Activated T-helper 2 cell treated with anti-CD3 and anti-CD28 coated beads, Interferon-gamma antibody, Interleukin-2, Interleukin-4, amounts not matched to agents 10 μg/mL and 5 μg/mL and 100 μg/mL, durations not matched to agents 14 hours and 24 hours and 36 hours (primary cell): ENCODE measurements at regions of chr1 and their contacts with region 1.

Region 1: DNA sequence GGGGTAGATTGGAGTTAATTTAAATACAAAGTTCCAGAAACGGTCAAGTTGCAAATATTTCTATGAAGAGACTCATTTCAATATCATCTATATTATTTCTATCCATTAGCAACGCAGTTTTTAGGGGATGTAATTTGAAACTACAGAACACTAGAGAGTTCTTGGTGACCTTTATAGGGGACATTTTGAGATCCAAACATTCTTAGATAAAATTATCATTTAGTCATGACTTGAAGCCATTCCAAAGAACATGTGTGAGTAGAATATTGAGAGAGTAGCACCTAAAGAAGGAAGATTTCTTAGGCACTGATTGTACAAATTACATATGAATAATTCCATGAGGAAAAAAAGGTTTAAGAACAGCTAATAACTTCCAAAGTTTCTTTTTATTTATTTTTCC is 19.0 kb downstream of the CHIA start:
- DNase-seq: no peak
- H3K4me3 Mint-ChIP-seq: no peak overlapping the region
- H3K27ac Mint-ChIP-seq: no peak overlapping the region
- H3K4me1 Mint-ChIP-seq: no peaks in the 10 kb centered on the region
- H3K27me3 Mint-ChIP-seq: peaks cover 21% of the 10 kb centered on the region

Region 2: GRCh38 chr1:110829955-110830553 is 479.6 kb before region 1 on chr1:
- intact Hi-C with region 1: loop called (anchors 5 kb)
- DNase-seq: peak; percentile 10
- H3K4me3 Mint-ChIP-seq: no peak overlapping the region
- H3K27ac Mint-ChIP-seq: no peak overlapping the region
- H3K4me1 Mint-ChIP-seq: peaks cover 3% of the 10 kb centered on the region
- H3K27me3 Mint-ChIP-seq: peaks cover 45% of the 10 kb centered on the region

Region 3: DNA sequence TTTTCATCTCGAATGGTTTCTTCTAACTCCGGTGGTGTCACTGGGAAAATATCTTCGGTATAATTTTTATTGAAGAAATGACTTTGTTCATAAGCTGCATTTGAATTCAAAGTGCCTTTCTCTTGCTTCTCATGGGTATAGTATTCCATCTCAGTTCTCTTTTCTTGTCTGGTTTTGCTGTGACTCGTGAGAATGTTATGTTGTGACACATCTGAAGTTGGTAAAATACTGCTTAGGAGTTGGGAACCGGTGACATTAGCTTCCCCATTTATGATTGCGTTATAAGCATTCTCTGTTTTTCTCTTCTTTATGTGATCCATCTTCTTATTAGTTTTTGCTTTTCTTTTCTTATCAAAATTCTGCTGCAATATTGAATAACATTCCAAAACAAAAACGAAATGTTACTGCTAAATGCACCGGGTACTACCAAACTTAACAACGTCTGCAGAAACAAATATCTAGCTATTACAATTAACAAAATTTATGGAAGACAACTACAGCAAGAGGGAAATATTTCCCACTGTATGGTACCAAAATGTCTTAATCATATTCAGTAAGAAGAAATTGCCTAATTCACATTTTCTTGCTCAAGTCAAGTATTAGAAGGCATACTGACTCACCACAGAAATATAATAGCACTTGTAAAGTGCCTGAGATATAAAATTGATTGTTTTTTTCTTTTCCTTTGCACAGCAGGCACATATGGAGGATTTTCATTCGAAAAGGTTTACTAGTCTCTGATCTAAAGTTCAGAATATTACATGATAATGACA is 361.5 kb before region 1 on chr1:
- intact Hi-C with region 1: no loop called
- DNase-seq: no peak
- H3K4me3 Mint-ChIP-seq: no peak overlapping the region
- H3K27ac Mint-ChIP-seq: no peak overlapping the region
- H3K4me1 Mint-ChIP-seq: peaks cover 10% of the 10 kb centered on the region
- H3K27me3 Mint-ChIP-seq: no peaks in the 10 kb centered on the region